ENCODE measurements at regions of chr1 and their contacts with region 1.

Region 1: GRCh38 chr1:187641463-187641862 is 812.7 kb downstream of the PLA2G4A start:
- DNase-seq: no peak
- ATAC-seq: peak; percentile 61
- H3K4me3 ChIP-seq: peak overlapping the region in 2 of 3 experiments; percentile 12 to 17; a peak in 2 of 6 replicates
- H3K27ac ChIP-seq: no peak overlapping the region
- H3K4me1 ChIP-seq: no peaks in the 10 kb centered on the region
- H3K27me3 ChIP-seq: no peaks in the 10 kb centered on the region
- CTCF ChIP-seq: no peak
- EP300 ChIP-seq: no peak
- POLR2A ChIP-seq: no peak
- RAD21 ChIP-seq: no peak

Region 2: DNA sequence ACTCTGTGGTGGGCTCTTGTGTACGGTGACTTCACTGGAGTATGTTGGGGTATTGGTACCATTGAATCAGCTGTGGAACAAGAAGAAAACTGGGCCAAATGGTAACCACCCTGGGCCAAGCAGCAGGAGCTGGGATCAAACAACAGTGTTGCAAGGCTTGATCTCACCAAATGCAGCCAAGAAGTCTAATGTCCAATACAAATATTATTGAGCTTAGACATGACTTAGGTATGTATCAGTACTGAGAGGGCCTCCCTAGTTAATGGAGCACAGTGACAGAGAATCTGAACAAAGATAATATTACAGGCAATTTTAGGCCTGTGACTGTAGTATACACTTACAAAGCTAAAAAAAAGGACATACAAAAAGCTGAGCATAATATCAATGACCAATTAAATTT is 207.9 kb before region 1 on chr1:
- CTCF ChIA-PET with region 1: no interaction called
- POLR2A ChIA-PET with region 1: no interaction called
- in situ Hi-C with region 1: no loop called
- intact Hi-C with region 1: loop called (anchors 5 kb)
- DNase-seq: no peak
- ATAC-seq: no peak
- H3K4me3 ChIP-seq: no peak overlapping the region
- H3K27ac ChIP-seq: no peak overlapping the region
- H3K4me1 ChIP-seq: no peaks in the 10 kb centered on the region
- H3K27me3 ChIP-seq: no peaks in the 10 kb centered on the region
- CTCF ChIP-seq: no peak
- EP300 ChIP-seq: no peak
- POLR2A ChIP-seq: no peak
- RAD21 ChIP-seq: no peak

Region 3: DNA sequence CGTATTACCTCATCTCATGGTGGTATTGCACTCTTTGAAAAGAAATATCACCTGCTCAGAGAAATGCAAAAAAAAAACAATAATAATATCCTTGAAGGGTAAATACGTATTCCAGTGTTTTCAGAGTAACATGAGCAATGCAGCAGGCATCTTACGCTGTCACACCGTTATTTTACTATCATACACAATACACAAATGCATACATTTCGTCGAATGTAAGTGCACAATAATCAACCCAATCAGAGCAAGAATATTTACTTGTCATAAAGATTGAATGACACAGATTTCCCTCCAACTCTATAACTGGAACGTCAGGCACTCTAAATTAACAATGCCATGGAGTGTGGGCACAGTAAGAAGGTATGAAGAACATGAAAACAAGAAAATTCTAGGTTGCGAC is 237.4 kb after region 1 on chr1:
- CTCF ChIA-PET with region 1: no interaction called
- POLR2A ChIA-PET with region 1: no interaction called
- in situ Hi-C with region 1: no loop called
- intact Hi-C with region 1: no loop called
- DNase-seq: no peak
- ATAC-seq: no peak
- H3K4me3 ChIP-seq: no peak overlapping the region
- H3K27ac ChIP-seq: no peak overlapping the region
- H3K4me1 ChIP-seq: no peaks in the 10 kb centered on the region
- H3K27me3 ChIP-seq: no peaks in the 10 kb centered on the region
- CTCF ChIP-seq: no peak
- EP300 ChIP-seq: no peak
- POLR2A ChIP-seq: no peak
- RAD21 ChIP-seq: no peak

Measured in HepG2 (cell line).